MCF 10A (cell line): ENCODE measurements at regions of chr17 and their contacts with region 1.

Region 1: GRCh38 chr17:72362376-72363088 is 241.7 kb downstream of the SOX9 start:
- DNase-seq: peak; percentile 93
- H3K4me3 Mint-ChIP-seq: peak overlapping the region; percentile 45
- H3K27ac Mint-ChIP-seq: peak overlapping the region; percentile 83
- H3K4me1 Mint-ChIP-seq: peaks cover 33% of the 10 kb centered on the region
- H3K27me3 Mint-ChIP-seq: no peaks in the 10 kb centered on the region
- CTCF ChIP-seq: no peak

Region 2: DNA sequence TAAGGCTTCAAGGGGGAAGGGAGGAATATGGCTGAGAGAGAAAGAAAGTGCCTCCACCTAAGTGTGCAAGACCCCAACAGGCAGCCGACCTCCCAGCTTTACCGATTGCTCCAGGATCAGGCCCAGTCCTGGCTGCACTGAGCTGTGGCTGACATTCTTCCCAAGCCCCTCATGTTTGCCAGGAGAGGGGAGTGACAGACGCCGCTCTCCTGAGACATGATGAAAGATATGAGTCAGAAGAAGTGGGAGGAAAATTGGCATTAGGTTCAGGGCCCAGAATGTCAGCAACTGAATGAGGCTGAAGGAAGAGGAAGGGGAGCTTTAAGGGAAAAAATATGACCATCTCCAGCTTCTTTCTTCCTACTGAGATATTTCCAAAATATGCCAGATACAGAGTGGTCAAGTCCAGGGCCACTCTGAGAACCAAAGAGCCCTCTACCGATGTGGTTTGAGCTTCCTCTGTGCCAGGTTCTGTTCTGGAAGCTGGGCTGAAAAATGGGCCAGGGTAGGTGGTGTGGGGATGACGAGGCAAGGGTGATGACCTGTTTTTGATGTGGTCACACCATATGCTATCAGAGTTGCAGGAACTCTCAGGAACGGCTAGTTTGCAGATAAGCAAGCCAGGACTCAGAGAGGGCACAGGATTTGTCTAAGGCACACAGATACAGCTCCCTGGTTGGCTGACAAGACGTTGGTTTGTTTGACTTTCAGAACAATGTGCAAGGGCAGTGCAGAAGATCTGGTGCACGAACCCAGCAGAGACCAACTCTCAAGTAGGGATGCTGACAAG is 65.0 kb before region 1 on chr17:
- CTCF ChIA-PET with region 1: no interaction called
- POLR2A ChIA-PET with region 1: no interaction called
- intact Hi-C with region 1: loop called (anchors 2 kb)
- DNase-seq: peak; percentile 91
- H3K4me3 Mint-ChIP-seq: peak overlapping the region; percentile 37
- H3K27ac Mint-ChIP-seq: no peak overlapping the region
- H3K4me1 Mint-ChIP-seq: peaks cover 20% of the 10 kb centered on the region
- H3K27me3 Mint-ChIP-seq: no peaks in the 10 kb centered on the region
- CTCF ChIP-seq: no peak

Region 3: GRCh38 chr17:72399608-72400487 is 37.3 kb after region 1 on chr17:
- CTCF ChIA-PET with region 1: no interaction called
- POLR2A ChIA-PET with region 1: no interaction called
- intact Hi-C with region 1: no loop called
- DNase-seq: no peak
- H3K4me3 Mint-ChIP-seq: no peak overlapping the region
- H3K27ac Mint-ChIP-seq: no peak overlapping the region
- H3K4me1 Mint-ChIP-seq: peaks cover 6% of the 10 kb centered on the region
- H3K27me3 Mint-ChIP-seq: no peaks in the 10 kb centered on the region
- CTCF ChIP-seq: no peak

Region 4: DNA sequence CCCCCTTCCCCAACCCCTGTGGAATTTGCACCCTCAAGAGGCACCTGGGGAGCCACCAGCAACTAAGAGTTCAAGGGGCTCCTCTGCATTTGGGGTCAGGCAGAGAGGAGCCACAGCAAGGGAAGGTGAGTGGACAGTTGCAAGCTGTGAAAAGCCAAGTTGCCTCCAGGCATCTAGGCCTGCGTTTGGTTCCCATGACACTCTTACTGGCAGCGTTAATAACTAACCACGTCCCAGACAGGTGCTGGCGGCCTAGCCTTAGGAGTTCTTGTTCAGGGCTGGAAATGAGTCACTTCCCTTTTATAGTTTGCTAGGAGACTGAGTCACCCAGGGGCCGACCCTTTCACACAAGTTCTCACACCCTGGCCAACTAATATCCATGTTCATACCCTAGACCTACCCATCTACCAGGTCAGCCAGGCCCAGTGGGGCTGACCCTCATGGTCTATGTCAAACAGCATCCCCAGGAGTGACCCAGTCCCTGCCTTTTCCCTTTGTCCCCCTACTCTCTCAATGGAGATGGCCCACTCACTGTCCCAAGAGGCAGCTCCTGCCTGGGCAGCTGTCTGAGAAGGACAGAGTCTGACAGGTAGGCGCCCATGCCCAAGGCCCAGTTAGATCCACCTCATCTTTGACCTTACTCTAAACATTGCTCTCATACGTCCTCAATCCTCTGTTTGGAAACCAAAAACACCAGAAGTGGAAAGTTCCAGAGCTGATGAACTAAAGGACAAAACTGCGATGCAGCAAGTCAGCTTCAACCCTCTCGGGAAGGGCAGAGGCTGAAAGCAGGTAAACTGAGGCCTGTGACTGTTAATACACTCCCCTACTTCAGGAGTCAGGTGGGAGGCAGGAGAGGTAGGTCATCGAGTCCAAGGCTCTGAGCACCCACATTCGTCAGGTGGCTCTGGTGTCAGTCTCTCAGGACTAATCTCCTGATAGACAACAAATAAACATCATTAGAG is 58.9 kb after region 1 on chr17:
- CTCF ChIA-PET with region 1: no interaction called
- POLR2A ChIA-PET with region 1: no interaction called
- intact Hi-C with region 1: loop called (anchors 1 kb)
- DNase-seq: peak; percentile 99
- H3K4me3 Mint-ChIP-seq: no peak overlapping the region
- H3K27ac Mint-ChIP-seq: peak overlapping the region; percentile 57
- H3K4me1 Mint-ChIP-seq: peaks cover 61% of the 10 kb centered on the region
- H3K27me3 Mint-ChIP-seq: no peaks in the 10 kb centered on the region
- CTCF ChIP-seq: no peak

Region 5: DNA sequence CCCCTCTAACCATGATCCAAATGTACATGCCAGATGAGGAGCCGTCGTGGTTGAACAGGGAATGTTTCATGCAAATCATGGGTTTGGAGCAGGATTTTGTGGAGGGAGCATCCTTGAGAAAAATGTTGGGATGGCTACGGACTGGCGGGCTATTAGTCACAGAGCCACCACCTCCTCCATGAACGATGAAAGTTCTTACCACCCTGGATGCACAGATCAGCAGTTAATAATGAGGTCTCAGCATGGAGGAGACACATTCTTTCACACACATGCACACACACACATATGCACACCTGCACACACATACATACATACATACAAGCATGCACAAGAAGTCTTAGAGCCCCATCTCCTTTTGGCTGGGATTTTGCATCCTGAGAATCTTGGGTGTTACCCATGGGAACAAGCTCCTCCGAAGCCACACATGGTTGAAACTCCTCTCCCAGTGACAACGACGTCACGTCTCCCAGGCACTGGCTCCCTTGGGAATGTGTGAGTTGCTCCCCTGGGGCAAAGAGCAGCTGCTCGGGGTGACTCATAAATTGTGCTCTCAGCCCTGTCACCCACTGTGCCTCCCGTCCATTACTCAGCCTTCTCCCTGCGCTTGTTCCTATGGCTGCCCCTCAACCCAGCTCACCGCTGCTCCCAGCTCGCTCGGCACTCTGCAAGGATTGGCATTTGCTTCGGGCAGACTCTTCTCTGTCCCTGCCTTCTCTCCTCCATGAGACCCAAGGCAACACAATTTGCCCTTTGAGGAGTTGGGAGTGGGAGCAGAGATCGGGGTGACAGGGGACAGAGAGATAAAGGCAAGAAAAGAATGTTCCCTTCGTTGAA is 102.9 kb after region 1 on chr17:
- CTCF ChIA-PET with region 1: no interaction called
- POLR2A ChIA-PET with region 1: no interaction called
- intact Hi-C with region 1: loop called (anchors 2 kb)
- DNase-seq: peak; percentile 97
- H3K4me3 Mint-ChIP-seq: peak overlapping the region; percentile 63
- H3K27ac Mint-ChIP-seq: no peak overlapping the region
- H3K4me1 Mint-ChIP-seq: peaks cover 50% of the 10 kb centered on the region
- H3K27me3 Mint-ChIP-seq: no peaks in the 10 kb centered on the region
- CTCF ChIP-seq: no peak